OCI-LY7 (cell line): ENCODE measurements at regions of chr9 and their contacts with region 1.

Region 1: GRCh38 chr9:112905084-112905483 is 14.4 kb upstream of the SLC46A2 start:
- DNase-seq: no peak
- H3K4me3 ChIP-seq: no peak overlapping the region
- H3K27ac ChIP-seq: no peak overlapping the region
- H3K4me1 ChIP-seq: no peaks in the 10 kb centered on the region
- CTCF ChIP-seq: no peak

Region 2: DNA sequence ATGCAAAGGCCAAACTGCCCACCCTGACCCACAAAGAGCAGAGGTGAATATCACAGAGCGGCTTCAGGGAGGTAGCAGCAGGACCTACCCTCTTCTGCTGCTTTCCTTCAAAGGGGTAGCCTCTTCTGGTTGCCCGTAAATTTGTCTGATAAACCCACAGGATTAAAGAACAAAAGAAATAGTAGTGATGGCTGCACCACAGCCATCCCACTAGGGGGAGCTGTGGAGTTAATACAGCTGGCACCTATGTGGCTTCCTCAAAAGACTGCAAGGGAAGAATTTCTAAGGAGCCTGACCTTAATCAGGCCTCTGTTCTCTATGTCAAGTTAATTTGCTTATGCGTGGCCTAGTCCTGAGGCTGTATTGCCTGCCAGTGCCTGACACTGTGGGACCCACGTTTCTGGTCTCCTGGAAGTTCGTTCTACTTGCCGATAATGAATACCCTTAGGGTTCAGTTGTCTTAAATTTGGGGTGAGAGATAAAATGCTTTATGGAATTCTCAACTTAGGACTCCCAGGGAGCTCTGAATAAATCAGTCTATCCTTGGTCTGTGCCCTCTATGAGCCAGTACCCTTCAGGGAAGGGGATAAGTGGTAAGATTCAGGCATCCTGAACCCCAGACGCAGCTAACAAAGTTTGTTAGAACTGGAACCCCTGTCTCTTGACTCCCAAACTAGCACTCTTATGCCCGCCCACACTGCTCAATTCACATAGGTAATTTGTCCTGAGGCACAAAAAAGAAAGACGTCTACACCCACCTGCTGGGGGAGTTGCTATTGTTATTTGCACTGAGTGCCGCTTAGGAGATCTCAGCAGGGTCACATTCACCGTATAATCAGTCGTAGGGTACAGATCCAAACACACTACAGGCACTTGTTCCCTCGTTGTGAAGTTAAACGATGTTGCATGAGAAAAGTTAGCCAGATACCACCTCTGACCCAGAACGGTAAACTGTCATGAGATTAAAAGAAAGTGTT is 807.1 kb before region 1 on chr9:
- CTCF ChIA-PET with region 1: no interaction called
- POLR2A ChIA-PET with region 1: no interaction called
- intact Hi-C with region 1: loop called (anchors 10 kb)
- DNase-seq: peak; percentile 80
- H3K4me3 ChIP-seq: no peak overlapping the region
- H3K27ac ChIP-seq: no peak overlapping the region
- H3K4me1 ChIP-seq: no peaks in the 10 kb centered on the region
- CTCF ChIP-seq: peak; percentile 89